Esophagus muscularis mucosa (tissue), 4 donors: ENCODE measurements at regions of chr17 and their contacts with region 1.

Region 1: GRCh38 chr17:4881761-4882555 is 17.4 kb upstream of the C17orf107 start:
- DNase-seq: no peak
- H3K4me3 ChIP-seq: no peak overlapping the region
- H3K27ac ChIP-seq: no peak overlapping the region
- H3K4me1 ChIP-seq: peaks cover 0 to 9% (median 7%) of the 10 kb centered on the region in 4 donors
- H3K27me3 ChIP-seq: no peaks in the 10 kb centered on the region
- CTCF ChIP-seq: peak; percentile 68 to 81 (median 68)
- EP300 ChIP-seq: no peak
- POLR2A ChIP-seq: no peak

Region 2: GRCh38 chr17:4709794-4710692 is 171.9 kb before region 1 on chr17 and contains the start of gene ARRB2:
- intact Hi-C with region 1: loop called (anchors 10 kb)
- DNase-seq: peak; percentile 99
- H3K4me3 ChIP-seq: peak within 1 kb of the TSS; percentile 73 to 84 (median 80)
- H3K27ac ChIP-seq: peak within 1 kb of the TSS; percentile 82 to 89 (median 86)
- H3K4me1 ChIP-seq: peaks cover 17 to 31% (median 27%) of the 10 kb centered on the region in 4 donors
- H3K27me3 ChIP-seq: no peaks in the 10 kb centered on the region
- CTCF ChIP-seq: peak; percentile 67 to 78 (median 76)
- EP300 ChIP-seq: no peak
- POLR2A ChIP-seq: no peak
- total RNA-seq, gene ARRB2: 25.4 to 41.4 (median 31.4) TPM

Region 3: DNA sequence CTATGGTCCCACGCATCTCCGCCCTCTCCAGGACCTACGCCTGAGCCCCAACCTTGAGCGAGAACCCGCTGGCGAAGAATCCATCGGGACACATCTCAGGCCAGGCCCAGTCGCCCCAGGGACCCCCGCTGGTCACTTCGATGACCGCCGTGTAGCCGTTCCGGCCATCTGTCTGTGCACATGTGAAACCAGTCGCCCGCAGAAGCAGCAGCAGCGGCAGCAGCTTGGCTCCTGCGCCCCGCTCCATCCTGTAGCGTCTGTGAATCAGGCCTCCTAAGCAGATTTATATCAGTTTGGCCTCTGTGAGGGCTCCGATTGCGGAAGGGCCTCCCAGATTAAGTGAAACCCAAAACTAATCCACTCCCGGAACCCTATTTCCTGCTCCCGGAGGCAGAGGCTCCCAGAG is 95.8 kb before region 1 on chr17 and contains the start of gene VMO1:
- intact Hi-C with region 1: no loop called
- DNase-seq: no peak
- H3K4me3 ChIP-seq: peak within 1 kb of the TSS; percentile 31 to 50 (median 42)
- H3K27ac ChIP-seq: peak within 1 kb of the TSS in 1 of 4 donors; percentile 16
- H3K4me1 ChIP-seq: peaks cover 36 to 50% (median 49%) of the 10 kb centered on the region in 4 donors
- H3K27me3 ChIP-seq: peaks cover 0 to 47% (median 9%) of the 10 kb centered on the region in 4 donors
- CTCF ChIP-seq: no peak
- EP300 ChIP-seq: no peak
- POLR2A ChIP-seq: no peak
- total RNA-seq, gene VMO1: 0.86 to 3.3 (median 2.6) TPM

Region 4: GRCh38 chr17:4806777-4807604 is 75.0 kb before region 1 on chr17 and contains the start of gene PLD2:
- intact Hi-C with region 1: loop called (anchors 5 kb)
- DNase-seq: peak; percentile 93
- H3K4me3 ChIP-seq: peak within 1 kb of the TSS; percentile 84 to 97 (median 91)
- H3K27ac ChIP-seq: peak within 1 kb of the TSS; percentile 76 to 84 (median 82)
- H3K4me1 ChIP-seq: peaks cover 10 to 26% (median 22%) of the 10 kb centered on the region in 4 donors
- H3K27me3 ChIP-seq: no peaks in the 10 kb centered on the region
- CTCF ChIP-seq: no peak
- EP300 ChIP-seq: no peak
- POLR2A ChIP-seq: no peak
- total RNA-seq, gene PLD2: 9.6 to 15.2 (median 12.0) TPM

Region 5: GRCh38 chr17:4833178-4833940 is 48.6 kb before region 1 on chr17 and contains the start of gene MINK1:
- intact Hi-C with region 1: loop called (anchors 10 kb)
- DNase-seq: peak; percentile 94
- H3K4me3 ChIP-seq: peak within 1 kb of the TSS; percentile 72 to 99 (median 89)
- H3K27ac ChIP-seq: peak within 1 kb of the TSS; percentile 89 to 97 (median 92)
- H3K4me1 ChIP-seq: peaks cover 35 to 49% (median 43%) of the 10 kb centered on the region in 4 donors
- H3K27me3 ChIP-seq: no peaks in the 10 kb centered on the region
- CTCF ChIP-seq: peak in 1 of 3 experiments; percentile 15
- EP300 ChIP-seq: no peak
- POLR2A ChIP-seq: peak; percentile 53
- total RNA-seq, gene MINK1: 28.8 to 55.2 (median 38.8) TPM

Region 6: DNA sequence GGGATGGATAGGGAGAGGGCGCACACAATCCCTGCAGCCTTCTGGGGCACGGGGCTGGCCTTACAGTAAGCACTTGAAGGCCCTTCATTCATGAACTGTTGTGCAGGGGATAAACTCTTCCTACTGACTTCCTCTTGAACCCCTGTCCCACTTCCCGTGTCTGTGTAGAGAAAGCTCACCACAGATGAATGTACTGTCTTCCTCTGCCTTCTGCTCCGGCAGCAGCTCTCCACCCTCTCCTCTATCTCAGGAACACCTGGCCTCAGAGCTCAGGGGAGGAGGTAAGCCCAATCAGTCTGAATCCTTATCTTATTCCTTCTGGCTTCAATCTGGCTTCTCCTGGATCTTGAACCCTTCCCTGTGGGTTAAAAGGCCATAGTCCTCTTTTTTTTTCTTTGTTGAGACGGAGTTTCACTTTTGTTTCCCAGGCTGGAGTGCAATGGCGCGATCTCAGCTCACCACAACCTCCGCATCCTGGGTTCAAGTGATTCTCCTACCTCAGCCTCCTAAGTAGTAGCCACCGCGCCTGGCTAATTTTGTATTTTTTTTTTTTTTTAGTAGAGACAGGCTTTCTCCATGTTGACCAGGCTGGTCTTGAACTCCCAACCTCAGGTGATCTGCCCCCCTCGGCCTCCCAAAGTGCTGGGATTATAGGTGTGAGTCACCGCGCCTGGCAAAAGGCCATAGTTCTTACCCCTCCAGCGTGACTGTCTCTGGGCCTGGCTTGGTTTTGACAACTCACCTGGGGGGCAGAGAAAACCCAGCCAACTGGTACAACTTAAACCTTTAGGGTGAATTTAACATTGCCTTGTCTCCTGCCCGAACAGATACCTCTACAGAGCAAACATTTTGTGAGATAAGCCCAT is 160.4 kb after region 1 on chr17:
- intact Hi-C with region 1: no loop called
- DNase-seq: no peak
- H3K4me3 ChIP-seq: no peak overlapping the region
- H3K27ac ChIP-seq: no peak overlapping the region
- H3K4me1 ChIP-seq: no peaks in the 10 kb centered on the region
- H3K27me3 ChIP-seq: peaks cover 0 to 1% (median 0%) of the 10 kb centered on the region in 4 donors
- CTCF ChIP-seq: no peak
- EP300 ChIP-seq: no peak
- POLR2A ChIP-seq: no peak

Region 7: GRCh38 chr17:5364156-5364555 is 482.2 kb after region 1 on chr17:
- intact Hi-C with region 1: no loop called
- DNase-seq: no peak
- H3K4me3 ChIP-seq: no peak overlapping the region
- H3K27ac ChIP-seq: no peak overlapping the region
- H3K4me1 ChIP-seq: no peaks in the 10 kb centered on the region
- H3K27me3 ChIP-seq: no peaks in the 10 kb centered on the region
- CTCF ChIP-seq: no peak
- EP300 ChIP-seq: no peak
- POLR2A ChIP-seq: no peak